Panc1 (cell line): ENCODE measurements at regions of chr7 and their contacts with region 1.

Region 1: GRCh38 chr7:20158684-20159083 is 58.5 kb downstream of the MACC1 start:
- DNase-seq: no peak
- ATAC-seq: no peak
- H3K4me3 ChIP-seq: no peak overlapping the region
- H3K27ac ChIP-seq: no peak overlapping the region
- H3K4me1 ChIP-seq: no peaks in the 10 kb centered on the region
- H3K27me3 ChIP-seq: no peaks in the 10 kb centered on the region
- CTCF ChIP-seq: no peak

Region 2: DNA sequence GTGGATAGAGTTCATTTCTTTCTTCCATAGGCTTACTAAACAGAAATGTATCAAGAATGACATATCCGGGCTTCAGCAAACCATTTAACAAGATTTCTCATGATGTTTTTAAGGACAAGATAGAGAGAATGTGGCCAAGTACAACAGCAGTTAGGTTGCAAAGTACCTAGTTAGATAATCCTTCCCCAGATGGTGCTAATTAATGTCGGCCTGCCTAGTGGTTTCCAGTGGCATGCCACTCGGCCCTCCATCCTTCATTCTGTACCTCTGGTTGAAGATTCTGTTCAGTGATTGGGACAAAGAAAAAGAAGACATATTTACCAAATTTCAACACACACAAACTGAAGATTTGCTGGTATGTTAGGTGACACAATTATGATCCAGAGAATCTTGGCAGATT is 153.6 kb before region 1 on chr7:
- CTCF ChIA-PET with region 1: no interaction called
- POLR2A ChIA-PET with region 1: no interaction called
- in situ Hi-C with region 1: no loop called
- intact Hi-C with region 1: no loop called
- DNase-seq: no peak
- ATAC-seq: no peak
- H3K4me3 ChIP-seq: no peak overlapping the region
- H3K27ac ChIP-seq: no peak overlapping the region
- H3K4me1 ChIP-seq: no peaks in the 10 kb centered on the region
- H3K27me3 ChIP-seq: no peaks in the 10 kb centered on the region
- CTCF ChIP-seq: no peak

Region 3: GRCh38 chr7:20033621-20034400 is 124.9 kb before region 1 on chr7:
- CTCF ChIA-PET with region 1: no interaction called
- POLR2A ChIA-PET with region 1: no interaction called
- in situ Hi-C with region 1: no loop called
- intact Hi-C with region 1: no loop called
- DNase-seq: peak; percentile 5
- ATAC-seq: no peak
- H3K4me3 ChIP-seq: no peak overlapping the region
- H3K27ac ChIP-seq: no peak overlapping the region
- H3K4me1 ChIP-seq: no peaks in the 10 kb centered on the region
- H3K27me3 ChIP-seq: no peaks in the 10 kb centered on the region
- CTCF ChIP-seq: no peak

Region 4: GRCh38 chr7:20219446-20220292 is 61.0 kb after region 1 on chr7:
- CTCF ChIA-PET with region 1: no interaction called
- POLR2A ChIA-PET with region 1: no interaction called
- in situ Hi-C with region 1: no loop called
- intact Hi-C with region 1: loop called (anchors 10 kb)
- DNase-seq: no peak
- ATAC-seq: no peak
- H3K4me3 ChIP-seq: no peak overlapping the region
- H3K27ac ChIP-seq: no peak overlapping the region
- H3K4me1 ChIP-seq: no peaks in the 10 kb centered on the region
- H3K27me3 ChIP-seq: no peaks in the 10 kb centered on the region
- CTCF ChIP-seq: no peak